Heart left ventricle (tissue), 16 donors: ENCODE measurements at regions of chr22 and their contacts with region 1.

Region 1: DNA sequence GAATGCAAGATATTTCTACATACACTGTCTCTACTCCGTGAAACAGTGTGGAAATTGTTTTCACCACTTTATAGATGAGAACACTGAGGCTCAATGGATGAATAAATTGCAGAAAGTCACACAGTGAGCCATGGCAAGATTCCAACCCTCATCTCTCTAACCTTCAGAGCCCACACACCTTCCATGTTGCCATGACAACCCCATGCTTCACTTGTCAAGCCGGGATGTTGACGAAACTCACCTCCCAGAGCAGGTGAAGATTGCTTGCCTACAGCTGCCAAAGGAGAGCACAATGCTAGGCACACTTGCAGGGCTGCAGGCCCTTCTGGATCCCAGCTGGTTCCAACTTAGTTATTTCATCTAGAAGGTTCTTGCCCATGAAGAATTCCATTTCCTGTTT is 71.4 kb upstream of the SEZ6L start:
- DNase-seq: no peak
- ATAC-seq: no peak
- H3K4me3 ChIP-seq: no peak overlapping the region
- H3K27ac ChIP-seq: no peak overlapping the region
- H3K4me1 ChIP-seq: no peaks in the 10 kb centered on the region
- H3K27me3 ChIP-seq: peaks cover 0 to 18% (median 0%) of the 10 kb centered on the region in 9 donors
- CTCF ChIP-seq: no peak
- POLR2A ChIP-seq: no peak

Region 2: DNA sequence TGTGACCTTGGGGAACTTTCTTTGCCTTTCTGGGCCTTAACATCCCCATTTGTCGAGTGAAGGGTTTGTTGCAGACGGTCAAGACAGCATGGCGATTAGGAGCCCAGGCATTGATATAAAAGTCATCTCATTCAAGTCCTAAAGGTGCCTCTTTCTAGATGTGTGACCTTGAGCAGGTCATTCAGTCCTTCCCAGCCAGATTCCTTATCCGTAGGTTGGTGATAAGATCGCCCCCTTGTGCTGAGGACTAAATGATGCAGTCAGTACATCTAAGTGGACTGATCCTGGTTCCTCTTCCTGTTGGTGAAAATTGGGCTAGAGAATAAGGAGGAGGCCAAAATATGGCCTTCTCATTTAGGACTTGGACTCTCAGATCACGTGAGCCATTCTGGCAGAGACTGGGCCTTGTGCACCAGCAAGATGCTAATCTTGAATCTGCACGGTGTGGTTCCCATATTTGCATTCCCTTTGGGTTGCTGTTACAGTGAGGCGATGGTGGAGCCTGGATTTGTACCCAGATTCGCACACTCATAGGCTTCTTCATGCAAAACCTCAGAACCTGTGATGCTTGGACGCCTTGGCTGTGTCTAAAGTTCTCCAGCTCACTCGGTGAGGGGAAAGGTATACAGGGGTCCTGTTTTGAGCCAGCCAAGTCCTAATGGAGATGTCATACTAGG is 199.0 kb before region 1 on chr22:
- intact Hi-C with region 1: no loop called
- DNase-seq: no peak
- ATAC-seq: peak in 1 of 4 donors; percentile 31
- H3K4me3 ChIP-seq: no peak overlapping the region
- H3K27ac ChIP-seq: peak overlapping the region in 2 of 12 donors; percentile 16 to 37
- H3K4me1 ChIP-seq: peaks cover 0 to 9% (median 0%) of the 10 kb centered on the region in 12 donors
- H3K27me3 ChIP-seq: no peaks in the 10 kb centered on the region
- CTCF ChIP-seq: peak in 4 of 12 donors; percentile 4 to 20 (median 16)
- POLR2A ChIP-seq: no peak

Region 3: DNA sequence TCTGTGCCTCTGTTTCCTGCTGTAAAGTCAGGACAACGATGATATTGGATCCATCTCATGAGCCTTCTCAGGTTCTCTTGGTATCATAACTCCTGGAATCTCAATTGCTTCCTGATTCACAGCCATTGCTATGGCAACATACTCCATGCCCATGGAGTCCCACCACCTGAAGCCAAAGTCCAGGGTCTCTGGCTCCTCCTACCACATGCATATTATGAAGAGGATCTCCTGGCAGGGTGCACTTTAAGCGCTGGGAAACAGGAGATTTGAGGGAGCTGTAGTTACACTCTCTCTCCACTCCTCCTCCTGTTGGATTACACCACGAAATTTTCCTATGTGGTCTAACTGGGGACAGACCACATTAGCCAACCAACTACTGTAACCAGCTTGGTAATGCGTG is 59.5 kb before region 1 on chr22:
- intact Hi-C with region 1: no loop called
- DNase-seq: no peak
- ATAC-seq: no peak
- H3K4me3 ChIP-seq: no peak overlapping the region
- H3K27ac ChIP-seq: no peak overlapping the region
- H3K4me1 ChIP-seq: no peaks in the 10 kb centered on the region
- H3K27me3 ChIP-seq: no peaks in the 10 kb centered on the region
- CTCF ChIP-seq: no peak
- POLR2A ChIP-seq: no peak

Region 4: DNA sequence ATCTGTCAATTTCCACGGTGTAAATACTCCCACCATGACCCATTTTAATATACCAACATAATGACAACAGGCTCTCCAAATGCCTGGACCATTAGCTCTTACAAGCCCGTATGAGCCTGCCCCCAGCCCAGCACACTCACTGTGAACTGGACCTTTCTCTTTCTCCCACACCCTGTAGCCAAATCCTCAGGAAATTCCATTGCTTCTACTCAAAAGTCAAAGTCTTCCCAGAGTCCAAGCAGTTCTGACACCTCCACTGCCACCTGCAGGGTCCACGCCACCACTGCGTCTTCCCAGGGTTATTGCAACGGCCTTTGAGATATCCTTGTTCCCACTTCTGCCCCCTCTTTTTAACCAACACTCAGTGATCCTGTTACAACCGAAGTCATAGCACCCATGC is 221.1 kb after region 1 on chr22:
- intact Hi-C with region 1: loop called in 1 of 10 experiments (anchors 10 kb)
- DNase-seq: no peak
- ATAC-seq: no peak
- H3K4me3 ChIP-seq: no peak overlapping the region
- H3K27ac ChIP-seq: no peak overlapping the region
- H3K4me1 ChIP-seq: peaks cover 0 to 6% (median 0%) of the 10 kb centered on the region in 12 donors
- H3K27me3 ChIP-seq: no peaks in the 10 kb centered on the region
- CTCF ChIP-seq: no peak
- POLR2A ChIP-seq: no peak